ENCODE measurements at regions of chr3 and their contacts with region 1.

Region 1: DNA sequence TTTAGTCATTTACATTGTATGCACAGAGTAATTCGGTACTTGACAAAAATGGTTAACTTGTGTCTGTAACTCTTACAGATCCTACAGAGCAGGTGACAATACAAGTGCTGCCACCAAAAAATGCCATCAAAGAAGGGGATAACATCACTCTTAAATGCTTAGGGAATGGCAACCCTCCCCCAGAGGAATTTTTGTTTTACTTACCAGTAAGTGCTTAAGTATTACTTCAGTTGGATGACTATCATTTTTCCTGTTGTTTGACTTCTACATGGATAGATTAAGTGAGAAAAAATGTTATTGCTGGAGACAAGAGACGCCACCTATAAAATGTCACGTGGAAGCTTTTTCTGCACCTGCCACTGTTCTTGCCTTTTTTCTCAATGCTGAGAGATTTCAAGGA is 173.2 kb downstream of the ALCAM start:
- DNase-seq: no peak
- ATAC-seq: no peak
- H3K4me3 ChIP-seq: no peak overlapping the region
- H3K27ac ChIP-seq: no peak overlapping the region
- H3K4me1 ChIP-seq: no peaks in the 10 kb centered on the region
- H3K27me3 ChIP-seq: no peaks in the 10 kb centered on the region
- CTCF ChIP-seq: no peak
- EP300 ChIP-seq: no peak
- POLR2A ChIP-seq: no peak
- RAD21 ChIP-seq: no peak

Region 2: GRCh38 chr3:105527949-105528348 is 11.9 kb before region 1 on chr3:
- CTCF ChIA-PET with region 1: interaction called, 3 read pairs
- POLR2A ChIA-PET with region 1: no interaction called
- RAD21 ChIA-PET with region 1: interaction called, 5 read pairs
- SMC1A ChIA-PET with region 1: interaction called, 18 read pairs
- in situ Hi-C with region 1: no loop called
- intact Hi-C with region 1: no loop called
- DNase-seq: no peak
- ATAC-seq: peak; percentile 93
- H3K4me3 ChIP-seq: no peak overlapping the region
- H3K27ac ChIP-seq: no peak overlapping the region
- H3K4me1 ChIP-seq: no peaks in the 10 kb centered on the region
- H3K27me3 ChIP-seq: no peaks in the 10 kb centered on the region
- CTCF ChIP-seq: no peak
- EP300 ChIP-seq: no peak
- POLR2A ChIP-seq: no peak
- RAD21 ChIP-seq: no peak

Region 3: DNA sequence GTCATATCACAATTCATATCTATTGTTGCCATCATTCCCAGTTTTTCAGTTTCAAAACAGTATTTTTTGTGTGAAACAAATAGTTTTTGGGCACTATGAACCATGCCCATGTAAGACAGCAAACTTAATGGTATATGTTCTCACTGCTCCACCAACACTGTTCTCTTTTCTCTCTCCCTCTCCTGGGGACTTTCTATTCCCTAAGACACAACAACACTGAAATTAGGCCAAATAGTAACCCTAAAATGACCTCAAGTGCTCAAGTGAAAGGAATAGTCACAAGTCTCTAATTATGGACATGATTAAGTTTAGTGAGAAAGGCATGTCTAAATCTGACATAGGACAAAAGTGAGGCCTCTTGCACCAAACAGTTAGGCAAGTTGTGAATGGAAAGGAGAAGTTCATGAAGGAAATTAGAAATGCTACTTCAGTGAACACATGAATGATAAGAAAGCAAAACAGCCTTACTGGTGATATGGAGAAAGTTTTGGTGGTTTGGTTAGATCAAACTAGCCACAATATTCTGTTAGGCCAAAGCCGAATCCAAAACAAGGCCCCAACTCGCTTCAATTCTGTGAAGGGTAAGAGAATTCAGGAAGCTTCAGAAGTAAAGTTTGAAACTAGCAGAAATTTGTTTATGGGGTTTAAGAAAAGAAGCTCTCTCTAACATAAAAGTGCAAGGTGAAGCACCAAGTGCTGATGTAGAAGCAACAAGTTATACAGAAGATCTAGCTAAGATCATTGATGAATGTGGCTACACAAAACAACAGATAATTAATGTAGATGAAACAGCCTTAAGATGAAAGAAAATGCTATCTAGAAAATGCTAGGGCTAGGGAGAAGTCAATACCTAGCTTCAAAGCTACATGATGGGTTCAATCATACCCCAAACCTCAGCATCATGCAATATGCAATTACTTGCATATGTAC is 224.7 kb after region 1 on chr3:
- CTCF ChIA-PET with region 1: no interaction called
- POLR2A ChIA-PET with region 1: no interaction called
- RAD21 ChIA-PET with region 1: no interaction called
- SMC1A ChIA-PET with region 1: no interaction called
- in situ Hi-C with region 1: no loop called
- intact Hi-C with region 1: no loop called
- DNase-seq: no peak
- ATAC-seq: peak; percentile 79
- H3K4me3 ChIP-seq: no peak overlapping the region
- H3K27ac ChIP-seq: no peak overlapping the region
- H3K4me1 ChIP-seq: peaks cover 11% of the 10 kb centered on the region
- H3K27me3 ChIP-seq: no peaks in the 10 kb centered on the region
- CTCF ChIP-seq: no peak
- EP300 ChIP-seq: no peak
- POLR2A ChIP-seq: no peak
- RAD21 ChIP-seq: no peak

Region 4: DNA sequence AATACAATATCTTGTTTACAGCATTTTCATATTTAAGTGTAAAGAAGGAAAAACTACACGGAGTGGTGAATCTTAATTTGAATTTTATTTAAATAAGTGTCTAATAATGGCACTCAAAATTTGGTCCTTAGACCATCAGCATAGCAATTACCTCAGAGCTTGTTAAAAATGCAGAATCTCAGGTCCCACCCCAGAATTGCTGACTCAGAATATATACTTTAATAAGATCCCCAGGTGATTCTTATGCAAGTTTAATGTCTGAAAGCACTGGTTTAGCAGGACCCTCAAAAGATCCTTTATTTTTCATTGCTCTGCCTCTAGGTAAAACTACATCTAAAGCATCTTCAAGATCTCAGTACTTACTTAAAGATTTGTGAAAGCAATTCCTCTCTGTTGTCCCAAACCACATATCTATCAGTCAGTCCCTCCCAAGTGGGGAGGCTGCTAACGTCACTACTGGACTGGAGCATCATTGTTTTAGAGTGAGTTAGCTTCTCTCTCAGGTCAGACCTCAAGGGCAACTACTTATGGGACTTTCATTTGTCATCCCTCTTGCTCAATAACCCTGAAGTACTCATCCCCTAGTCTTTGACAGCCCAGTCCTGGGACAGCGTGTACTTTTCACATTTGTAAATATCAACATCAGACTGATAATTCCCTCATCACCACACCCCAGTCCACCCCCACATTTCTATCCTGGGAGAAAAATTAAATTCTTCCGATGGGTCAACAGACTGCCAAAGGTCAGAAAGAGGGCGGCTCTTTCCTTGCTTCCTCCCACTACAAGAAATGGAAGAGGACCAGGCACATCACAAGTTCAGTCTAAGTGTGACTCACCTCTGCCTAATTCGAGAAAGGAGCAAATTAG is 252.3 kb after region 1 on chr3:
- CTCF ChIA-PET with region 1: no interaction called
- POLR2A ChIA-PET with region 1: no interaction called
- RAD21 ChIA-PET with region 1: no interaction called
- SMC1A ChIA-PET with region 1: no interaction called
- in situ Hi-C with region 1: no loop called
- intact Hi-C with region 1: no loop called
- DNase-seq: no peak
- ATAC-seq: no peak
- H3K4me3 ChIP-seq: no peak overlapping the region
- H3K27ac ChIP-seq: no peak overlapping the region
- H3K4me1 ChIP-seq: no peaks in the 10 kb centered on the region
- H3K27me3 ChIP-seq: no peaks in the 10 kb centered on the region
- CTCF ChIP-seq: no peak
- EP300 ChIP-seq: no peak
- POLR2A ChIP-seq: no peak
- RAD21 ChIP-seq: no peak

Measured in GM12878 (cell line).